ENCODE measurements at regions of chr9 and their contacts with region 1.

Region 1: GRCh38 chr9:6703898-6704639 is 53.7 kb upstream of the KDM4C start:
- DNase-seq: peak; percentile 92 to 95
- ATAC-seq: peak; percentile 92
- H3K4me3 ChIP-seq: peak overlapping the region; percentile 22 to 27
- H3K27ac ChIP-seq: peak overlapping the region in 1 of 2 donors; percentile 2
- H3K4me1 ChIP-seq: no peaks in the 10 kb centered on the region
- H3K27me3 ChIP-seq: no peaks in the 10 kb centered on the region

Region 2: GRCh38 chr9:6681147-6681956 is 22.7 kb before region 1 on chr9:
- intact Hi-C with region 1: loop called in 1 of 2 experiments (anchors 2 kb)
- DNase-seq: peak; percentile 98 to 99
- ATAC-seq: peak; percentile 99
- H3K4me3 ChIP-seq: peak overlapping the region; percentile 49 to 72
- H3K27ac ChIP-seq: peak overlapping the region; percentile 88 to 95
- H3K4me1 ChIP-seq: no peaks in the 10 kb centered on the region
- H3K27me3 ChIP-seq: no peaks in the 10 kb centered on the region

Region 3: GRCh38 chr9:6739218-6739617 is 35.1 kb after region 1 on chr9:
- intact Hi-C with region 1: no loop called
- DNase-seq: no peak
- ATAC-seq: no peak
- H3K4me3 ChIP-seq: no peak overlapping the region
- H3K27ac ChIP-seq: no peak overlapping the region
- H3K4me1 ChIP-seq: no peaks in the 10 kb centered on the region
- H3K27me3 ChIP-seq: no peaks in the 10 kb centered on the region